WTC11 (cell line): ENCODE measurements at regions of chr17 and their contacts with region 1.

Region 1: DNA sequence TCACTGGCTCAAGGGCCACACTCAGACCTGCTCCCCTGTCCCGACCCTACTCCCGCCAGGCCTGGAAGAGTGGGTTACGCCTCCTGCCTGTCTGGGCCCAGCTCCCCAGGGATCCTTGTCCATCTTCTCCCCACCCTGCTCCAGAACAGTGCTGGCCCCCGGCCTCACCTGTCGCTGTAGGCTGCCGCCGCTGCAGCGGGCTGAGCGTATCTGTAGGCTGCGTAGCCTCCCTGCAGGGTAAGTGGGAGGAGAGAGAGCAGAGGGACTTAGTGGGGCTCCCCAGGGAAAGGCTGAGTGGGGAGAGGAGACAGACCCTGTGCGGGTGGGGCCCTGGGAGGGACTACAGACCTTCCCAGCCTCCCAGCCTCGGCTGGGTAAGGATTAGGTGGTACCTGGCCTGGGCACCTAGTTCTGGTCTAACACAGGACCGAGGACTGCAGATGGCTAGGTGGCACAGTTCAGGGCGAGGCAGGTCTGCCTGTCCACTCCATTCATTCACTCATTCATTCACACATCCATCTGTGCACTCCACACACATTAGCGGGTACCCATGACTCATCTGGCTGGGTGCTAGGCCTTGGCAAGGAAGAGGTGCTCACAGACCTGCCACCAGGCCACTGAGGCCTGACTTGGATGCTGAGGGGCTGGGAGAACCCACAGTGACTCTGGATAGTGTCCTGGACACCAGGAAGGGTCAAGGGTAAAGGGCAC is 20.9 kb downstream of the ENGASE start:
- DNase-seq: no peak
- ATAC-seq: no peak
- H3K4me3 Mint-ChIP-seq: peak overlapping the region; percentile 34; the same call in 1 of the 2 replicates
- H3K27ac Mint-ChIP-seq: no peak overlapping the region
- H3K4me1 Mint-ChIP-seq: peaks cover 7% of the 10 kb centered on the region
- H3K27me3 Mint-ChIP-seq: no peaks in the 10 kb centered on the region; the same call in 1 of the 2 replicates
- CTCF ChIP-seq: no peak

Region 2: GRCh38 chr17:79109570-79109969 is 14.1 kb after region 1 on chr17:
- CTCF ChIA-PET with region 1: interaction called, 25 read pairs
- POLR2A ChIA-PET with region 1: no interaction called
- DNase-seq: peak; percentile 60
- ATAC-seq: peak; percentile 78
- H3K4me3 Mint-ChIP-seq: no peak overlapping the region
- H3K27ac Mint-ChIP-seq: no peak overlapping the region
- H3K4me1 Mint-ChIP-seq: no peaks in the 10 kb centered on the region
- H3K27me3 Mint-ChIP-seq: no peaks in the 10 kb centered on the region
- CTCF ChIP-seq: 0 out of 2 replicates have a peak, but pooled peaks have one; percentile 23

Region 3: GRCh38 chr17:79136596-79136995 is 41.1 kb after region 1 on chr17:
- CTCF ChIA-PET with region 1: interaction called, 13 read pairs
- POLR2A ChIA-PET with region 1: no interaction called
- DNase-seq: no peak
- ATAC-seq: no peak
- H3K4me3 Mint-ChIP-seq: no peak overlapping the region
- H3K27ac Mint-ChIP-seq: no peak overlapping the region
- H3K4me1 Mint-ChIP-seq: no peaks in the 10 kb centered on the region
- H3K27me3 Mint-ChIP-seq: no peaks in the 10 kb centered on the region
- CTCF ChIP-seq: no peak